BJ (cell line): ENCODE measurements at regions of chr2 and their contacts with region 1.

Region 1: DNA sequence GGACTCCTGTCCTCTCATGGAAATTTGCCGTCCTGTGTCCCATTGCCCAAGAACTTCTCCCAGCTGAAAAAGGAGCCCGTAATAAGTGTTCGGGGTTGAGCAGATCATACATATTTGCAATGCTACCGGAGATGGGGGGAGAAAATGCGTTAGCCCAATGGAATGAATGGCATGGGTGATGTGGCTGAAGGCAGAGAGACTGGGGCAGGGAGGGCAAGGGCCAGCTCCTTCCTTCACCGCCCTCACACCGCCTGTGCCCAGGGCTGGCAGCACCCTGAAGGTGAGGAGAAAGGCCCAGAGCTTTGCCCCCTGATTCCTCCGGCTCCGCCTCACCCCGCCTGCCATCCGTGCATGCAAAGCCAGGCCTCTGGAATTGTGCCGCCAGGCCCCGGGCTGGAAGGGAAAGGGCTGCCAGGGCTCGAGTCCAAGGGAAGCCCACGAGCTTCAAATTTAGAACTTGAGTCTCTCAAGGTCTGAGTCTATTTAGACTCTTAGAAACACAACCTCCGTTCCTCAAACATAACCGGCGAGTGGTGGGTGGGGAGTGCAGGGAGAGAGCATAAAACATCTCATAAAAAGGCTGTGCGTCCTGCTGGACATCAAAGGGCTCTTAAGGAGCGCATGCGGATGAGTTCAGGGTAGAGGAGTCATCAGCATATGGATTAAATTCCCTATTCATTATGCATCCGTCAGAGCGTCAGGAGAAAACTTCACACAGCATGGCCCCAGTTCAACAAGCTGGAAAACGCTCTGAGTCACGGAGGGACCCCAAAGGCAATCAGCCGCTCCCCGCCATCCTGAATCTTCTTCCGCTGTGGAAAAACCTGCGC is 121.7 kb upstream of the GLI2 start:
- DNase-seq: peak; percentile 88
- H3K4me3 ChIP-seq: no peak overlapping the region
- H3K27me3 ChIP-seq: no peaks in the 10 kb centered on the region
- CTCF ChIP-seq: no peak

Region 2: GRCh38 chr2:120596990-120597594 is 16.9 kb before region 1 on chr2:
- CTCF ChIA-PET with region 1: interaction called, 5 read pairs
- POLR2A ChIA-PET with region 1: interaction called, 10 read pairs
- DNase-seq: peak; percentile 77
- H3K4me3 ChIP-seq: no peak overlapping the region
- H3K27me3 ChIP-seq: no peaks in the 10 kb centered on the region
- CTCF ChIP-seq: no peak

Region 3: GRCh38 chr2:120631724-120632123 is 17.8 kb after region 1 on chr2:
- CTCF ChIA-PET with region 1: interaction called, 9 read pairs
- POLR2A ChIA-PET with region 1: interaction called, 10 read pairs
- DNase-seq: no peak
- H3K4me3 ChIP-seq: no peak overlapping the region
- H3K27me3 ChIP-seq: peaks cover 2% of the 10 kb centered on the region
- CTCF ChIP-seq: no peak

Region 4: GRCh38 chr2:120686511-120687168 is 72.7 kb after region 1 on chr2:
- CTCF ChIA-PET with region 1: no interaction called
- POLR2A ChIA-PET with region 1: no interaction called
- DNase-seq: no peak
- H3K4me3 ChIP-seq: no peak overlapping the region
- H3K27me3 ChIP-seq: 0 out of 2 replicates have a peak, but pooled peaks cover 2% of the 10 kb centered on the region
- CTCF ChIP-seq: peak; percentile 46